ENCODE measurements at regions of chr6 and their contacts with region 1.

Region 1: DNA sequence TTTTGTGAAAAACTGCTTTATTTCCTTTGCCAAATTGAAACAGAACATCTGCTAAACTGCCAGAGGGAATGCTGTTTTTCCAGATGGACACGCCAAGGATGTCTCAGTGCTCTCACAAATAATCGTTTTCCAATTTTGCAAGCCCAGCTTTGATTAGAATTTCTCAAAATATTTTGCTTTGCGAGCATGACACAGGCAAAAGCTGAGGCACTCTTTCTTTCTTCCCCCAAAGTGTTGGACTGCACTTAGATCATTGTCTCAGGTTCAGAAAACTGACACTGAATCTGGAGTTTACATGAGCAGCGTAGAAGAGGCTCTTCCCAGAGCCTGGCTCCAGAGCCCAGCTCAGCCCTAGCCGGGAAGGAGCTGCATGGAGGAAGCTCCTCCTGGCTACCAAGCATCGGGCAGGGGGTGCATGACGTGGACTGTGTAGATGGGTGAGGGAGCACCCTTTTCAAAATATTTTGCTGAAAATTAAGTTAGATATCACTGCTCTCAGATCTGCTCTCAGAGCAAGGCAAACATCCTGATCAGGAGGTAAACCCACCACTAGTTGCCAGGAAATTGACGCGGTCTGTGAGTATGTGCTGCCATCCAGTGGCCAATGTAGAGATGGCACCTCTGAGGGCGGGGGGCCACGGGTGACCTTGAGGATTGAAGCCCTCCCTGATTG is 107.5 kb downstream of the SLC22A3 start:
- DNase-seq: peak in 1 of 2 experiments; percentile 31
- H3K4me3 ChIP-seq: no peak overlapping the region
- H3K27ac ChIP-seq: no peak overlapping the region
- H3K4me1 ChIP-seq: peaks cover 6% of the 10 kb centered on the region; the same call in 1 of the 2 replicates
- H3K27me3 ChIP-seq: no peaks in the 10 kb centered on the region
- CTCF ChIP-seq: peak; percentile 99

Region 2: GRCh38 chr6:159862103-159862502 is 593.6 kb before region 1 on chr6:
- CTCF ChIA-PET with region 1: no interaction called
- POLR2A ChIA-PET with region 1: no interaction called
- intact Hi-C with region 1: loop called (anchors 5 kb)
- DNase-seq: no peak
- H3K4me3 ChIP-seq: no peak overlapping the region
- H3K27ac ChIP-seq: no peak overlapping the region
- H3K4me1 ChIP-seq: no peaks in the 10 kb centered on the region
- H3K27me3 ChIP-seq: 0 out of 2 replicates have a peak, but pooled peaks cover 5% of the 10 kb centered on the region
- CTCF ChIP-seq: no peak

Region 3: DNA sequence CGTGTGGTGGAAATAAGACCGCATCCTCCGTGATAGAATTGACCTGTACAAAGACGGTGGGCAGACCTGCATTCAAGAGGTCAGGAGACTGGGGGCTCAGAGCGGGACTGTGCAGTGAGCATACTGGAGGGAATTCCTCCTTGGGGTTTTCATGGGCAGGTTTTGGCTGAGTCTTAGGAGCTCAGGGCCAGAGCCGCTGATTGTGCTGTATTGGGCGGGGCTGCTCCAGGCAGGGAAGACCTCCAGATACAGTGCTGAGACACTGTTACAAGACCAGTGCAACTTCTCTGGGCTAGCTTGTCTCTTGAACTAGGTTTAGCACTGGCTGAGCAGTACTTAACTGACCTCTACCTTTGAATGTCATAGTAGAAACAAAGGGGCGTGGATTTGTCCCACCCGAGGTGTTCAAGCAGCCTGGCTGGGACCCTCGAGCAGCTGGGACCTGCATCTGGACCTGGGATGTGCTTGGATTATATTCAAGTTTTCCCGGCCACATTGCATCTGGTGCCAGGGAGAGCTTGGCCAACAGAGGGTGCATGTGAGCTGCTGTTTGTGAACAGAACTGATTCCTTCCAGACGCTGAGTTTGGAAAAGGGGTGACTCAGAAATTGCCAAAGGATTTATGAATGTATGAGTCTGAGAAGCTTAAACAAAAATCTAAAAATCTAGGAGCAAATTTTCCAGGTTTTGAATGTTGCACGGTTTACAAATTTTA is 367.5 kb before region 1 on chr6:
- CTCF ChIA-PET with region 1: interaction called, 3 read pairs
- POLR2A ChIA-PET with region 1: no interaction called
- intact Hi-C with region 1: loop called (anchors 5 kb)
- DNase-seq: peak in 1 of 2 experiments; percentile 9
- H3K4me3 ChIP-seq: no peak overlapping the region
- H3K27ac ChIP-seq: no peak overlapping the region
- H3K4me1 ChIP-seq: no peaks in the 10 kb centered on the region
- H3K27me3 ChIP-seq: no peaks in the 10 kb centered on the region
- CTCF ChIP-seq: peak; percentile 73

Region 4: GRCh38 chr6:160137989-160138835 is 317.5 kb before region 1 on chr6:
- CTCF ChIA-PET with region 1: interaction called, 3 read pairs
- POLR2A ChIA-PET with region 1: no interaction called
- intact Hi-C with region 1: loop called (anchors 1 kb)
- DNase-seq: peak; percentile 34 to 53
- H3K4me3 ChIP-seq: no peak overlapping the region
- H3K27ac ChIP-seq: no peak overlapping the region
- H3K4me1 ChIP-seq: peaks cover 22% of the 10 kb centered on the region
- H3K27me3 ChIP-seq: no peaks in the 10 kb centered on the region
- CTCF ChIP-seq: peak; percentile 84

Region 5: DNA sequence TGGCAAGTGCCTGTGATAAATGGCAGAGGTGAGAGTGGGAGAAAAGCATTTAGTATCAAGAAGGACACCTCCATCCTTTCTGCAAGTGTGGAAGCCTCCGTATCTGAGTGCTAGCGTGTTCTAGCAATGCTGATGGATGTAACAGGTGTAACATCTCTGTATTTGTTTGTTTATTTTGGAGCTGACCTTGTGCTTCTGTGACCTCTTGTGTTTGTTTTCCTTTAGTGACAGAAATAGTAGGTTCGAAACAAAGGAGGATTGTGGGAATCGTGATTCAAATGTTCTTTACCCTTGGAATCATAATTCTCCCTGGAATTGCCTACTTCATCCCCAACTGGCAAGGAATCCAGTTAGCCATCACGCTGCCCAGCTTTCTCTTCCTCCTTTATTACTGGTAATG is 47.1 kb before region 1 on chr6:
- CTCF ChIA-PET with region 1: no interaction called
- POLR2A ChIA-PET with region 1: no interaction called
- intact Hi-C with region 1: no loop called
- DNase-seq: no peak
- H3K4me3 ChIP-seq: no peak overlapping the region
- H3K27ac ChIP-seq: no peak overlapping the region
- H3K4me1 ChIP-seq: no peaks in the 10 kb centered on the region
- H3K27me3 ChIP-seq: no peaks in the 10 kb centered on the region
- CTCF ChIP-seq: no peak

Region 6: GRCh38 chr6:160573943-160574342 is 118.3 kb after region 1 on chr6:
- CTCF ChIA-PET with region 1: no interaction called
- POLR2A ChIA-PET with region 1: no interaction called
- intact Hi-C with region 1: no loop called
- DNase-seq: no peak
- H3K4me3 ChIP-seq: no peak overlapping the region
- H3K27ac ChIP-seq: no peak overlapping the region
- H3K4me1 ChIP-seq: no peaks in the 10 kb centered on the region
- H3K27me3 ChIP-seq: no peaks in the 10 kb centered on the region
- CTCF ChIP-seq: no peak